ENCODE measurements at regions of chr21 and their contacts with region 1.

Region 1: DNA sequence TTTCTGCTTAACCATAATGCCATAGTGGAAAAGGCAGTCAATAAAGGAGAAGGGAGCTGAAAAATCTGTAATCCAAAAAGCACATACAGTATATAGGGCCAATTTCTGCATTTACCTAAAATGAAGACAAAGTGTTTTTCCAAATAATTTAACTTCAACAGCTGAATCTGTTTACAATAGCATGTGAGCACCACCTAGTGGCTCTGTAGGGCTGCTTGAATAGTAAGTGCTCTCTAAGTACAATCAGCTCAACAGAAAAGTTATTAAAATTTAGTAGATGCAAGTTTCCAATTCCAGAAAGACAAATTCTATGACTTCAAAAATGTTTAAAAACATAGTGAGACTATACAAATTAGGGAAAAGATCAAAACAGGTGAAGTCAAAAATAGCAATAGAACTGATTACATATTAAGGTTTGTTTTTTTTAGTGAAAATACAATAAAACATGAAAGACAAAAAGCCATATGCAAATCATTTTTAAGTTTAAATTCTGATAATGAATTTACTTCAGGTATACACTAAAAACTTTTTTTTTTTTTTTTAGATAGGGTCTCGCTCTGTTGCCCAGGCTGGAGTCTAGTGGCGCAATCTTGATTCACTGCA is 220.0 kb downstream of the SETD4 start:
- DNase-seq: peak; percentile 91
- ATAC-seq: peak; percentile 85
- H3K4me3 ChIP-seq: no peak overlapping the region
- H3K27ac ChIP-seq: no peak overlapping the region
- H3K4me1 ChIP-seq: no peaks in the 10 kb centered on the region
- H3K27me3 ChIP-seq: no peaks in the 10 kb centered on the region
- CTCF ChIP-seq: peak; percentile 94
- POLR2A ChIP-seq: 0 out of 2 replicates have a peak, but pooled peaks have one; percentile 29
- RAD21 ChIP-seq: peak; percentile 90

Region 2: GRCh38 chr21:35204850-35205541 is 635.3 kb before region 1 on chr21:
- CTCF ChIA-PET with region 1: no interaction called
- POLR2A ChIA-PET with region 1: no interaction called
- dilution Hi-C with region 1: no loop called
- in situ Hi-C with region 1: no loop called
- intact Hi-C with region 1: loop called (anchors 10 kb)
- DNase-seq: peak; percentile 98
- ATAC-seq: peak; percentile 78
- H3K4me3 ChIP-seq: peak overlapping the region; percentile 25; the same call in 1 of the 2 replicates
- H3K27ac ChIP-seq: peak overlapping the region; percentile 91
- H3K4me1 ChIP-seq: peaks cover 40% of the 10 kb centered on the region
- H3K27me3 ChIP-seq: no peaks in the 10 kb centered on the region
- CTCF ChIP-seq: peak; percentile 44
- POLR2A ChIP-seq: peak; percentile 53; the same call in 1 of the 2 replicates
- RAD21 ChIP-seq: peak; percentile 43

Region 3: DNA sequence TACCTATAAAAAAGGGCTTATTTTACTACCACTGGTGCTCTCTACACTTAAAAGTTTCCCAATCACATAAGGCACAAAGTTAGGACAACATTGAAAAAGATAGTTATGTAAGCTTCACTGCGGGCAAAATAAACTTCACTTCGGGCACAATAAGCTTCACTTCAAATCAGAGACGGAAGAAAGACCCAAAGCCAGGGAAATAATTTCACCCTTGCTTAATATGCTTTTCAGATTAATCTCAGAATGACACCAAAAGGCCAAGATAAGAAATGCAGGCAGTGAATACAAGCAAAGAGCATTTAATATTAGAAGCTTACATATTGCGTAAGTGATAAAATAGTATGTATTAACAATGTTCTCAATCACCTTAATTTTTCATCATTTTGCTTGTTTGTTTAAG is 224.2 kb before region 1 on chr21:
- CTCF ChIA-PET with region 1: no interaction called
- POLR2A ChIA-PET with region 1: no interaction called
- dilution Hi-C with region 1: no loop called
- in situ Hi-C with region 1: no loop called
- intact Hi-C with region 1: loop called (anchors 2 kb)
- DNase-seq: peak; percentile 70
- ATAC-seq: peak; percentile 66
- H3K4me3 ChIP-seq: no peak overlapping the region
- H3K27ac ChIP-seq: no peak overlapping the region
- H3K4me1 ChIP-seq: peaks cover 9% of the 10 kb centered on the region
- H3K27me3 ChIP-seq: no peaks in the 10 kb centered on the region
- CTCF ChIP-seq: peak; percentile 60
- POLR2A ChIP-seq: no peak
- RAD21 ChIP-seq: peak; percentile 63

Region 4: GRCh38 chr21:36028127-36029069 is 188.1 kb after region 1 on chr21:
- CTCF ChIA-PET with region 1: no interaction called
- POLR2A ChIA-PET with region 1: no interaction called
- dilution Hi-C with region 1: no loop called
- in situ Hi-C with region 1: no loop called
- intact Hi-C with region 1: loop called (anchors 1 kb)
- DNase-seq: peak; percentile 73
- ATAC-seq: peak; percentile 97
- H3K4me3 ChIP-seq: no peak overlapping the region
- H3K27ac ChIP-seq: no peak overlapping the region
- H3K4me1 ChIP-seq: peaks cover 7% of the 10 kb centered on the region
- H3K27me3 ChIP-seq: no peaks in the 10 kb centered on the region
- CTCF ChIP-seq: peak; percentile 97
- POLR2A ChIP-seq: no peak
- RAD21 ChIP-seq: peak; percentile 98